ENCODE measurements at regions of chr12 and their contacts with region 1.

Region 1: GRCh38 chr12:14225064-14225463 is 140.4 kb upstream of the ATF7IP start:
- DNase-seq: no peak
- H3K4me3 ChIP-seq: no peak overlapping the region
- H3K27ac ChIP-seq: no peak overlapping the region
- H3K4me1 ChIP-seq: no peaks in the 10 kb centered on the region
- H3K27me3 ChIP-seq: no peaks in the 10 kb centered on the region
- CTCF ChIP-seq: no peak
- EP300 ChIP-seq: no peak
- POLR2A ChIP-seq: no peak

Region 2: DNA sequence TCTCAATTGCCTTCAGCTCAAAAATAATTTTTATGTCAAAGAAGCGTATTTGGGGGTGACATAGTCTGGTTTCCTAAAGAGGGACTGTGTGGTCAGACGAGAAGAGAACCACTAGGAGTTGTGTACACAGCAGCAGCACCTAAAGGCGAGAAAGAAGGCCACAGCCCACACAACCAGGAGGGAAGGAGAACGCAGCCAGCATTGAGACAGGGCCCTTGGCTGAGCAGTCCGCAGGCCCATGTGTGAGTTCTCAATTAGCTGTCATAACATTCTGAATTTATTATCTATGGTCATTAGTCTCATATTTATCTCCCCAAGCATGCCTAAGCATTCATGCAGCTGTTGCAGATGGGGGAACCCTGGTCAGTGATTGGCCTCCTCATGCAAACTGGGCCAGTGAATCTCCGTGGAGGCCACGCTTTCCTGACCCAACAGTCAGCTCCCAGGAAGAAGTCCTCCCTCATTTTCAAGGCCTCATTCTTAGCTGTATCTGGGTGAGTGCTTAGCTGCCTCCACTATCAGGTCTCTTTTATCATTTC is 59.2 kb after region 1 on chr12:
- intact Hi-C with region 1: no loop called
- DNase-seq: peak; percentile 80 to 89 (median 84)
- H3K4me3 ChIP-seq: no peak overlapping the region
- H3K27ac ChIP-seq: peak overlapping the region in 1 of 2 donors; percentile 66
- H3K4me1 ChIP-seq: peaks cover 3% of the 10 kb centered on the region
- H3K27me3 ChIP-seq: no peaks in the 10 kb centered on the region
- CTCF ChIP-seq: peak in 1 of 3 donors; percentile 37
- EP300 ChIP-seq: peak; percentile 9
- POLR2A ChIP-seq: no peak

Region 3: GRCh38 chr12:14828896-14829295 is 603.8 kb after region 1 on chr12:
- intact Hi-C with region 1: loop called in 1 of 4 experiments (anchors 5 kb)
- DNase-seq: no peak
- H3K4me3 ChIP-seq: no peak overlapping the region
- H3K27ac ChIP-seq: no peak overlapping the region
- H3K4me1 ChIP-seq: no peaks in the 10 kb centered on the region
- H3K27me3 ChIP-seq: no peaks in the 10 kb centered on the region
- CTCF ChIP-seq: no peak
- EP300 ChIP-seq: no peak
- POLR2A ChIP-seq: no peak